MCF 10A (cell line): ENCODE measurements at regions of chr14 and their contacts with region 1.

Region 1: GRCh38 chr14:67571272-67571850 is 28.7 kb downstream of the PIGH start:
- DNase-seq: peak; percentile 69
- H3K4me3 Mint-ChIP-seq: no peak overlapping the region
- H3K27ac Mint-ChIP-seq: no peak overlapping the region
- H3K4me1 Mint-ChIP-seq: peaks cover 12% of the 10 kb centered on the region
- H3K27me3 Mint-ChIP-seq: no peaks in the 10 kb centered on the region
- CTCF ChIP-seq: peak; percentile 85

Region 2: GRCh38 chr14:67446120-67447032 is 125.0 kb before region 1 on chr14:
- CTCF ChIA-PET with region 1: no interaction called
- POLR2A ChIA-PET with region 1: no interaction called
- intact Hi-C with region 1: loop called (anchors 5 kb)
- DNase-seq: no peak
- H3K4me3 Mint-ChIP-seq: no peak overlapping the region
- H3K27ac Mint-ChIP-seq: no peak overlapping the region
- H3K4me1 Mint-ChIP-seq: peaks cover 7% of the 10 kb centered on the region
- H3K27me3 Mint-ChIP-seq: no peaks in the 10 kb centered on the region
- CTCF ChIP-seq: no peak

Region 3: GRCh38 chr14:67526676-67527459 is 44.5 kb before region 1 on chr14:
- CTCF ChIA-PET with region 1: interaction called, 167 read pairs
- POLR2A ChIA-PET with region 1: interaction called, 6 read pairs
- intact Hi-C with region 1: loop called (anchors 1 kb)
- DNase-seq: peak; percentile 69
- H3K4me3 Mint-ChIP-seq: no peak overlapping the region
- H3K27ac Mint-ChIP-seq: no peak overlapping the region
- H3K4me1 Mint-ChIP-seq: no peaks in the 10 kb centered on the region
- H3K27me3 Mint-ChIP-seq: peaks cover 37% of the 10 kb centered on the region
- CTCF ChIP-seq: peak; percentile 65

Region 4: GRCh38 chr14:67583711-67584644 is 12.6 kb after region 1 on chr14:
- CTCF ChIA-PET with region 1: interaction called, 53 read pairs
- POLR2A ChIA-PET with region 1: no interaction called
- intact Hi-C with region 1: no loop called
- DNase-seq: peak; percentile 66
- H3K4me3 Mint-ChIP-seq: no peak overlapping the region
- H3K27ac Mint-ChIP-seq: no peak overlapping the region
- H3K4me1 Mint-ChIP-seq: no peaks in the 10 kb centered on the region
- H3K27me3 Mint-ChIP-seq: no peaks in the 10 kb centered on the region
- CTCF ChIP-seq: peak; percentile 65

Region 5: GRCh38 chr14:67704484-67705089 is 133.2 kb after region 1 on chr14:
- CTCF ChIA-PET with region 1: interaction called, 14 read pairs
- POLR2A ChIA-PET with region 1: no interaction called
- intact Hi-C with region 1: no loop called
- DNase-seq: peak; percentile 70
- H3K4me3 Mint-ChIP-seq: no peak overlapping the region
- H3K27ac Mint-ChIP-seq: no peak overlapping the region
- H3K4me1 Mint-ChIP-seq: peaks cover 9% of the 10 kb centered on the region
- H3K27me3 Mint-ChIP-seq: no peaks in the 10 kb centered on the region
- CTCF ChIP-seq: peak; percentile 75

Region 6: GRCh38 chr14:67798731-67799130 is 227.4 kb after region 1 on chr14:
- CTCF ChIA-PET with region 1: no interaction called
- POLR2A ChIA-PET with region 1: no interaction called
- intact Hi-C with region 1: no loop called
- DNase-seq: no peak
- H3K4me3 Mint-ChIP-seq: no peak overlapping the region
- H3K27ac Mint-ChIP-seq: no peak overlapping the region
- H3K4me1 Mint-ChIP-seq: no peaks in the 10 kb centered on the region
- H3K27me3 Mint-ChIP-seq: no peaks in the 10 kb centered on the region
- CTCF ChIP-seq: no peak